ENCODE measurements at regions of chr2 and their contacts with region 1.

Region 1: DNA sequence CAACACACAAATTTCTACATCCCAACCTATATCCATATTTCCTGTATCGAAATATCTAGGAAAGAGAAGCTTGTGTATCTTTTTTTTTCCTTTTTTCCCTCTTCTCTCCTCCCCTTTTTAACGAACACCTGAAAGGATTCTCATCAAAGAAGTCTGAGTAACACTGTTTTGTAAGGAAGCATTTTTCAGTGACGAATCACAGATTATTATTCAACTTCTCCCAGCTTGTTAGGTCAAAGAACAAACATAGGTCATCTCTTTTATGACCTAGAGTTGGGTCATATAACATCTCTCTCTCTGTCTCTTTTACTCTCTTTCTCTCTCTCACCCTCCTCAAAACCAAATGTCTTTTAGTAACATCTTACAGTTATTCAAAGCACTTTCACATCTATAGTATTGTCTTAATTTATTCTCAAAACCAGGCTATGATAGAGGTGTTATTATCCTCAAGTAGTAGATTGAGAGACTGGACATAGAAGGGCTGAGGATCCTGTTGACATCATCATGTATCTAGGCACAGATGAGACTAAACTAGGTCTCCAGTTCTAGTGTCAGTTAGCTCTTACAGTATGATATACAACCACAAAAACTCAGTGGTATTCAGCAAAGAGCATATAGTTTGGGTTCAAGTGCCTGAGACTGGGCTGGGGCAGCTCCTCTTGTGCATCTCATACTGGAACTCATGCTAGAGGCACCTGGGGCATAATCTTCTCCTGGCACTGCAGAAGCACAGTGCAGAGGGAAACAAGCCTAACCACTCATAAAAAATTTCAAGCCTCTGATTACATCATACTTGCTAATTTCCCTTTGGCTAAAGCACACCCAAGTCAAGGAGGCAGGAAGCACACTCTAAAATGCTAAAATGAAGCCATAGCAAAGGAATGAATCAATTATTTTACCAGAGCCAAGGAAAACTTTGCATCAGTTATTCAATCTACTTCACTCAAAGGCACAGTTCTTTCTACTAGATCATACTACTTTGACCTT is 80.0 kb upstream of the SPOPL start:
- DNase-seq: peak; percentile 54
- H3K4me3 Mint-ChIP-seq: peak overlapping the region; percentile 16
- H3K27ac Mint-ChIP-seq: peak overlapping the region; percentile 68
- H3K4me1 Mint-ChIP-seq: peaks cover 78% of the 10 kb centered on the region
- H3K27me3 Mint-ChIP-seq: no peaks in the 10 kb centered on the region
- CTCF ChIP-seq: no peak

Region 2: DNA sequence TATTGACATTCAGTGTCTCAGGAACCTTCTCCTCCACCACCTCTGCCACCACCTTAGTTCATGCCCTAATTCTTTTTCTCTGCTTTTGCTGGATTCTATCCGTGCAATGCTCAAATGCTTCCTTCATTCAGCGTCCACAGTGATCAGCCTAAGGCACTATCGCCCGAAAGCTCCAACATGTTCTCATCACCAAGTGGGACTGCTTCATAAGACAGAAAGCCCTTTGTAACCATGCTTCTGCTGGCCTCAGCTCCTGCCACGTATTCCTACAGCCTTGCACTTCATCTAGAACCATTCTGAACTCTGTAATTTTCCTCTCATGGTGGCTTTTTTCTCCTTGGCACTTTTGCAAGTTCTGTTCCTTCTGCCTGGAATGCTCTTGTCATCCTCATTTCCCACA is 234.4 kb before region 1 on chr2:
- CTCF ChIA-PET with region 1: no interaction called
- intact Hi-C with region 1: no loop called
- DNase-seq: no peak
- H3K4me3 Mint-ChIP-seq: no peak overlapping the region
- H3K27ac Mint-ChIP-seq: no peak overlapping the region
- H3K4me1 Mint-ChIP-seq: no peaks in the 10 kb centered on the region
- H3K27me3 Mint-ChIP-seq: no peaks in the 10 kb centered on the region
- CTCF ChIP-seq: no peak

Region 3: GRCh38 chr2:138267161-138267901 is 154.3 kb before region 1 on chr2:
- CTCF ChIA-PET with region 1: no interaction called
- intact Hi-C with region 1: loop called (anchors 5 kb)
- DNase-seq: peak; percentile 19
- H3K4me3 Mint-ChIP-seq: no peak overlapping the region
- H3K27ac Mint-ChIP-seq: peak overlapping the region; percentile 89
- H3K4me1 Mint-ChIP-seq: peaks cover 29% of the 10 kb centered on the region
- H3K27me3 Mint-ChIP-seq: no peaks in the 10 kb centered on the region
- CTCF ChIP-seq: no peak

Region 4: DNA sequence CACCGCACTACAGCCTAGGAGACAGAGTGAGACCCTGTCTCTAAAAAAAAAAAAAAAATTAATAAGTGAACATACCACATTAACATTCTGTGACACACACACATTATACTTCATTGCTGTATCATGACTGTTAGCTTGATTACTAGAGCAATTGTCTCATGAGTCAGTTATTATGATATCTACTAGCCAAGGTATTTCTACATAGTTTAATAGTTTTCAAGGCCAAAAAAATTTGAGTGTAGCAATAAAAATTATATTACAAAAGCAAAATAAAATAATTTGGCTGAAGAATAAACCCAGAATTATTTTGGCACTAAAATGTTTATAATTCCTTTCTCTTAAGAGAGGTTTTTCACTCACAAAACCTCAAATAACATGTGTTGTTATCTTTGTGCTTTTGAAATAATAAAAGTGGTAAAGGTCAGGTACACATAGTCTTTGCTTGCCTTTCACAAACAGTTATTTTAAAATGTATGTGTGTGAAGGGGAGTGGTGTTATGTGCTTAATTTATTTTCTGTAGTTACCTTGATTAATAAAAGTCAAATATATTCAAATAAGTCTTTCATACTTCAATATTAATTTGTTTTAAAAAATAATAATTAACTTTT is 57.0 kb before region 1 on chr2:
- CTCF ChIA-PET with region 1: no interaction called
- intact Hi-C with region 1: no loop called
- DNase-seq: no peak
- H3K4me3 Mint-ChIP-seq: no peak overlapping the region
- H3K27ac Mint-ChIP-seq: no peak overlapping the region
- H3K4me1 Mint-ChIP-seq: peaks cover 6% of the 10 kb centered on the region
- H3K27me3 Mint-ChIP-seq: no peaks in the 10 kb centered on the region
- CTCF ChIP-seq: no peak